ENCODE measurements at regions of chr4 and their contacts with region 1.

Region 1: DNA sequence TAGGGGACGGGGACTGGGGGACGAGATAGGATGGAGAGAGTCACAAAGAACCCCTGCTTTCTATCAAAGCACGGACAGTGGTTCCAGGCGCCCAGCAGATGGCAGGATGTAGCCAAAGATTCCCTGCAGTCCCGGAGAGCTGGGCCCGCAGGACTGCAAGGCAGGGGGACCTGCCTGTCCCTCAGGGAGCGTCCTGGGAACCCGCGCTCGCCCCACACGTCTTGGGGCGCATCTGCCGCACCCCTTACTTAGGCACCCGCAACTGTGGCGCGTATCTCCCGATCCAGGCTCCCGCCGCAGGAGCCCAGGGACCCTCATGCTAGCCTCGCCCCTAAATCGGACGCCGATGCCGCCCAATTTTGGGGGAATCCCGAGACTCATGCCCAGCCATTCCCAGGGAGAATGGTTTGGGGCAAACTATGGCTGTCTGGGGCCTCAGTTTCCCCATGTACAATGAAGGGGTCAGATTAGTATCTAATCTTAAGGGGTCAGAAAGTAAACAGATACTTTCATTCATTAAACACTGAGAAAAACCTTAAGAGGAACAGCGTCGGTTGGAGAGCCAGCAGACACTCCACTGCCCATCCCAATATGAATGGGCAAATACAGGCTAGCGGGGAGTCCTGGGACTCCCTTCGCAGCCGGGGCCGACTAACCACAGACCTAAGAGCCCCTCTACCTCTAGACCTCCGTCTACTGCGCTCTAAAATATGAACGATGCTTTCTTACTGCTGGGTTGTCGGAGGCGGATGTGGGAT is 581 bp upstream of the STK32B start:
- DNase-seq: peak; percentile 67 to 76
- ATAC-seq: peak in 2 of 4 donors; percentile 68 to 78
- H3K4me3 ChIP-seq: peak overlapping the region; percentile 58
- H3K27ac ChIP-seq: no peak overlapping the region
- H3K4me1 ChIP-seq: peaks cover 3% of the 10 kb centered on the region
- H3K27me3 ChIP-seq: peaks cover 0 to 21% (median 12%) of the 10 kb centered on the region in 3 donors
- CTCF ChIP-seq: peak; percentile 51

Region 2: GRCh38 chr4:4969298-4969697 is 81.4 kb before region 1 on chr4:
- intact Hi-C with region 1: no loop called
- DNase-seq: peak; percentile 78 to 87
- ATAC-seq: peak in 3 of 4 donors; percentile 74 to 80 (median 80)
- H3K4me3 ChIP-seq: no peak overlapping the region
- H3K27ac ChIP-seq: no peak overlapping the region
- H3K4me1 ChIP-seq: no peaks in the 10 kb centered on the region
- H3K27me3 ChIP-seq: peaks cover 0 to 4% (median 0%) of the 10 kb centered on the region in 3 donors
- CTCF ChIP-seq: no peak

Region 3: GRCh38 chr4:5137927-5138326 is 87.2 kb after region 1 on chr4:
- intact Hi-C with region 1: loop called in 1 of 2 experiments (anchors 5 kb)
- DNase-seq: no peak
- ATAC-seq: no peak
- H3K4me3 ChIP-seq: no peak overlapping the region
- H3K27ac ChIP-seq: no peak overlapping the region
- H3K4me1 ChIP-seq: no peaks in the 10 kb centered on the region
- H3K27me3 ChIP-seq: no peaks in the 10 kb centered on the region
- CTCF ChIP-seq: no peak

Region 4: GRCh38 chr4:5812506-5813229 is 762.0 kb after region 1 on chr4:
- intact Hi-C with region 1: loop called in 1 of 2 experiments (anchors 5 kb)
- DNase-seq: no peak
- ATAC-seq: peak in 1 of 4 donors; percentile 67
- H3K4me3 ChIP-seq: no peak overlapping the region
- H3K27ac ChIP-seq: no peak overlapping the region
- H3K4me1 ChIP-seq: no peaks in the 10 kb centered on the region
- H3K27me3 ChIP-seq: no peaks in the 10 kb centered on the region
- CTCF ChIP-seq: peak; percentile 52

Measured in psoas muscle (tissue), 8 donors.